ENCODE measurements at regions of chr1 and their contacts with region 1.

Region 1: DNA sequence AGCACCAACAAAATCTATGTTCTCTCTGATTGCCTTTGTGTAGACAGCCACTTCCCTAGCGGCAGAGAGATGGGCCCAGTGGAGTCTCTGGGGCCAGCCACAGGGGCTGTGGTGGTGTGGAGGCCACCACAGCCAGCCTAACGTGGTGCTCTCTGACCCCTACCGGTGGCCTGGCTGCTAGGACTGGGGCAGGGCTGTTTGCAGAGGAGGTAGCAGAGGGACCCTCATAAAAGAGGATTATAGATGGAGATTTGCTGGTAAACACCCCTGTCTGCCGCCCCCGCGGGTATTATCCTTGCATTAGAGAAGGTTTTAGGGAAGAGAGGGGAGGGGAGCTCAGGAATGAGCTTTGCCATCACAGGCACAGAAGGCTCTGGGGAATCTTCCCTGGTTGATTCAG is 310.3 kb upstream of the VAMP3 start:
- DNase-seq: no peak
- H3K4me3 ChIP-seq: no peak overlapping the region
- CTCF ChIP-seq: no peak

Region 2: DNA sequence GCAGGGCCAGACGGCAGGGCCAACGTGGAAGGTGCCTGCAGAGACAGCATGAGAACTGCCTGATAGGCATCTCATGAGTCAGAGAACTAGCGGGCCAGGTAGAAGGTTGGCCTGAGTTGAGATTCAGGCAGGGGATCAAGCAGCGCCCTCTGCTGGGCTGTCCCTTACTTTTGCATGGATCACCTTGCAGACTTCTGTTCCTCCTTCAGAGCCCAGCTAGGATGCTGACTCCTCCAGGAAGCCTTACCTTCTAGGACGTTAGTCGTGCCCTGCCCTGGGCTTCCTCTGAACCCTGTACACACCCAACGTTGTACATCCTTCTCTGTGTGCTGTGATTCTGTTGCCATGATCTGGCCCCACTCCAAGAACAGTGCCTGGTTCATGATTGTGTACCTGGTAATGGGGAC is 79.0 kb after region 1 on chr1:
- in situ Hi-C with region 1: loop called (anchors 5 kb)
- DNase-seq: no peak
- H3K4me3 ChIP-seq: no peak overlapping the region
- CTCF ChIP-seq: peak; percentile 32

Region 3: DNA sequence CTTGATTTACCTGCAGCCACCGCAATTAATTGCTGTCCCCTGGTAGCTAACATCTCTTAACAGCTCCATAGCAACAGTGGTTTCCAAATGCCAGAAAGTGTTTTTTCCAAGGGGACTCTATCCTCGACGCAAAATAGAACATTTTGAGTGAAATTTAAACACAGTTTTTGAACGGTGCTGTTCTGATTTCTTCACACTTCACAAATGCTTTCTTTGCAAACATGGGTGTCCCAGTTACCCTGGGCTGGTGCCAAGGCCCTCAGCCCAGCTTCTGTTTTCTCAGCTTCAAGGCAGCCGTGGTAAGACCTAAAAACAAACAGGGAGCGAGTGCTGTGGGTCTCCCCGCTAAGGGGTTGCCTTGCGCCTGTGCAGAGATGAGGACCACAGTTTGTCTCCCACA is 163.0 kb after region 1 on chr1:
- in situ Hi-C with region 1: no loop called
- DNase-seq: no peak
- H3K4me3 ChIP-seq: no peak overlapping the region
- CTCF ChIP-seq: no peak